Left lung (tissue), 14 donors: ENCODE measurements at regions of chr1 and their contacts with region 1.

Region 1: GRCh38 chr1:108828022-108828961 is 28.6 kb downstream of the AKNAD1 start:
- DNase-seq: peak in 3 of 4 donors; percentile 74 to 84 (median 75)
- ATAC-seq: peak; percentile 76
- H3K4me3 ChIP-seq: no peak overlapping the region
- H3K27ac ChIP-seq: peak overlapping the region; percentile 57 to 78
- H3K4me1 ChIP-seq: peaks cover 24 to 38% of the 10 kb centered on the region in 2 donors
- H3K27me3 ChIP-seq: no peaks in the 10 kb centered on the region
- CTCF ChIP-seq: peak; percentile 67 to 71

Region 2: GRCh38 chr1:108897865-108898720 is 69.8 kb after region 1 on chr1:
- intact Hi-C with region 1: loop called in 1 of 2 experiments (anchors 5 kb)
- DNase-seq: peak in 2 of 4 donors; percentile 48 to 68
- ATAC-seq: peak; percentile 89
- H3K4me3 ChIP-seq: no peak overlapping the region
- H3K27ac ChIP-seq: no peak overlapping the region
- H3K4me1 ChIP-seq: peaks cover 0 to 4% of the 10 kb centered on the region in 2 donors
- H3K27me3 ChIP-seq: no peaks in the 10 kb centered on the region
- CTCF ChIP-seq: peak; percentile 53 to 70

Region 3: DNA sequence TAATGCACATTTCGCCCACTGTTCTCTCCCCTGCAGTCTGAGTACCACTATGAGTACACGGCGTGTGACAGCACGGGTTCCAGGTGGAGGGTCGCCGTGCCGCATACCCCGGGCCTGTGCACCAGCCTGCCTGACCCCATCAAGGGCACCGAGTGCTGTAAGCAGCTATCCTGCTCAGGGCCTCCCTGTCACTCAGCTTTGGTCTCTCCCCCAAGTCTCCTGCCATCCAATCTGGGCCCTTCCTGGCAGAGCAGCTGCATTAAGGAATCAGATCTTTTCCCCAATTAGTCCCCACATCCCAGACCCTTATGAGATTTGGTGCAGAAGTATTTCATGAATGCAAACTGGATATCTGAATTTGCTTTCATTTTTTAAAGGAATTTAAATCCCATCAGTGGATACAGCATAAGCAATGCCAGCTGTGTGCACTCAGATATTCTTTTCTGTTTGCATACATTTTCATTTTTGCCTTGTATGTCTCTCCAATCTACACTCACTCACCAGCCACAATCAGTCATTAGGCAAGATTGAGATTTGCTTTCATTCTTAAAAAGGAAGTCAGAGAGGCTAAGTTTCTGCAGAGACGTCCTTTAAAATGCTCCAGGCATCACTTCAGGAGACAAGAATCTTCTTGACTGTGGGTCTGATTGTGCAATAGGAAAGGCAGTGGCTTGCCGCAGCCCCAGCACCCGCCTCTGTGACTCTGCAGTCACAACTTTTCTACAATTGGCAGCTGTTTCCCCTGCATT is 333.7 kb after region 1 on chr1:
- intact Hi-C with region 1: no loop called
- DNase-seq: peak; percentile 66 to 85 (median 78)
- ATAC-seq: peak; percentile 89
- H3K4me3 ChIP-seq: no peak overlapping the region
- H3K27ac ChIP-seq: peak overlapping the region; percentile 76 to 77
- H3K4me1 ChIP-seq: peaks cover 17 to 33% of the 10 kb centered on the region in 2 donors
- H3K27me3 ChIP-seq: no peaks in the 10 kb centered on the region
- CTCF ChIP-seq: no peak